ENCODE measurements at regions of chr16 and their contacts with region 1.

Region 1: DNA sequence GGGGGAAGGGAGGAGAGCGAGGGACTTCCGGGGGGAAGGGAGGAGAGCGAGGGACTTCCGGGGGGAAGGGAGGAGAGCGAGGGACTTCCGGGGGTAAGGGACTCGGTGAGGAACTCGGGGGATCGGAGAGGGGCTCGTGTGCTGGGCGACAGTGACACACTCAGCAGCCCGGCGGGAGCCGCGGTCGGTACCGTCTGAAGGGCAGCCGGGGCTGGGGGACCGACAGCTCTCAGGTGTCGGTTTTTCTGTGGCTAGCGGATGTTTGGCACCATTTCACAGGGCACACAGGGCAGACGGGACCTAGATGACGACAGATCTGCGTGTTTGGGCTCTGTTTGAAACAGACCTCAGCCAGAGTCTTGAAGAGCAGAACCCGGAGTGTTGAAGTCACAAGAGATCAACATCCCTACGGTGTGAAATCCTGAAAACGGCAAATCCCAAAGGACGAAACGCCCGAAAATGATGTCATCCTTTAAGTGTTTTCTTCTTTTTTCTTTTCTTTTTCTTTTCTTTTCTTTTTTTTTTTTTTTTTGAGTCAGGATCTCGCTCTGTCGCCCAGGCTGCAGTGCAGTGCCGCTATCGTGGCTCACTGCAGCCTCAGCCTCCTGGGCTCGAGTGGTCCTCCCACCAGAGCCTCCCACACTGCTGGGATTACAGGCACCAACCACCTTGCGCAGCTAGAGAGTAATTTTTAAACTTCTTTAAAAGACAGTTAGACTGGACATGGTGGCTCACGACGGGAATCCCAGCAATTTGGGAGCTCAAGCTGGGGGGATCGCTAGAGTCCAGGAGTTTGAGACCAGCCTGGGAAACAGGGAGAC is 23.9 kb downstream of the ZNF778 start:
- DNase-seq: peak; percentile 74
- H3K4me3 Mint-ChIP-seq: peak overlapping the region; percentile 99
- H3K27ac Mint-ChIP-seq: peak overlapping the region; percentile 100
- H3K4me1 Mint-ChIP-seq: peaks cover 29% of the 10 kb centered on the region
- H3K27me3 Mint-ChIP-seq: no peaks in the 10 kb centered on the region

Region 2: GRCh38 chr16:88856828-88857733 is 384.3 kb before region 1 on chr16 and contains the starts of genes GALNS and TRAPPC2L:
- CTCF ChIA-PET with region 1: no interaction called
- POLR2A ChIA-PET with region 1: interaction called, 10 read pairs
- DNase-seq: peak; percentile 99
- H3K4me3 Mint-ChIP-seq: peak within 1 kb of the TSS; percentile 97
- H3K27ac Mint-ChIP-seq: peak within 1 kb of the TSS; percentile 93
- H3K4me1 Mint-ChIP-seq: peaks cover 32% of the 10 kb centered on the region
- H3K27me3 Mint-ChIP-seq: no peaks in the 10 kb centered on the region
- total RNA-seq, gene GALNS: 29.4 to 35.7 TPM
- total RNA-seq, gene TRAPPC2L: 47.7 to 55.7 TPM